HCT116 (cell line): ENCODE measurements at regions of chr10 and their contacts with region 1.

Region 1: DNA sequence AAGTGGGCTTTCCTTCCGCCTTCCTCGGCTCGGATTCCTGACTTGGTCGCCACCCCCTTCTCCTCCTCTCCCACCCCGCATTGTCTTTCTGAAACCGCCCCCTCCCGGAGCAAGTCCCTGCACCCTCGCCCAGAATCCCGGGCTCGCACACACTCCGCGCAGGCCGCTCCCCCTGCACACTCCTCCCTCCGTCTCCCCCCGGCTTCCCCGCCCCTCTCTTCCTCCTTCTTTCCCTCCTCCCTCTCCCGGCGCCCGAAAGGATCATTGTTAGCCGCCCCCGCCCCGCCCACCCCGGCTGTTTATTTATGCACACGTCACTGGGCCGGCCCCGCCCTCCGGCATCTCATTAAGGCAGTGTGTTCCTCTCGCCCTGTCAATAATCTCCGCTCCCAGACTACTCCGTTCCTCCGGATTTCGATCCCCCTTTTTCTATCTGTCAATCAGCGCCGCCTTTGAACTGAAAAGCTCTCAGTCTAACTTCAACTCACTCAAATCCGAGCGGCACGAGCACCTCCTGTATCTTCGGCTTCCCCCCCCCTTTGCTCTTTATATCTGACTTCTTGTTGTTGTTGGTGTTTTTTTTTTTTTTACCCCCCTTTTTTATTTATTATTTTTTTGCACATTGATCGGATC is at the start of gene TCF7L2:
- DNase-seq: peak; percentile 100
- ATAC-seq: peak; percentile 84
- H3K4me3 ChIP-seq: peak within 1 kb of the TSS; percentile 73 to 78
- H3K27ac ChIP-seq: peak within 1 kb of the TSS; percentile 100
- H3K4me1 ChIP-seq: peaks cover 39 to 47% of the 10 kb centered on the region in 2 experiments
- H3K27me3 ChIP-seq: no peaks in the 10 kb centered on the region
- CTCF ChIP-seq: no peak
- POLR2A ChIP-seq: no peak
- RAD21 ChIP-seq: no peak
- total RNA-seq, gene TCF7L2: 164 TPM

Region 2: DNA sequence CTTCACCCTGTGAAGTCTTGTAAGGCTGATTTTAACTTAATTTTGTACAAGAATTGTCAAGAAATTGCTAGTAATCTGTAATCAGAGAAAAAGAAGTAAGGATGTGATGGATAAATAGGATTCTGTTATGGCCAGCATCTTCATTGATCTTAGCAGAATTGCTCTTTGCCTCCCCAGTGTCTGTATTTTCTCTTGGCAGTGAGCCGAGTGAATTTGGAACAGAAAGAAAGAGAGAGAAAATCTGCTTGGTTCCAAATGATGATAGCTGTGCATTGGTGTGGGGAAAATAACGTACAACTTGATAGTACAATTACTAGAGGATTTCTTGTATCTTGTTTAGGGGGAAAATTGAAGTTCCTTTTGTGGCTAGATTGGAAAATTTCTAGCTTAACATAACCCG is 468.4 kb before region 1 on chr10:
- CTCF ChIA-PET with region 1: no interaction called
- POLR2A ChIA-PET with region 1: no interaction called
- RAD21 ChIA-PET with region 1: no interaction called
- intact Hi-C with region 1: loop called (anchors 5 kb)
- DNase-seq: no peak
- ATAC-seq: no peak
- H3K4me3 ChIP-seq: no peak overlapping the region
- H3K27ac ChIP-seq: peak overlapping the region; percentile 23; the same call in 1 of the 2 replicates
- H3K4me1 ChIP-seq: peaks cover 81 to 90% of the 10 kb centered on the region in 2 experiments
- H3K27me3 ChIP-seq: no peaks in the 10 kb centered on the region
- CTCF ChIP-seq: no peak
- POLR2A ChIP-seq: no peak
- RAD21 ChIP-seq: no peak

Region 3: GRCh38 chr10:112721080-112721698 is 228.8 kb before region 1 on chr10:
- CTCF ChIA-PET with region 1: no interaction called
- POLR2A ChIA-PET with region 1: no interaction called
- RAD21 ChIA-PET with region 1: no interaction called
- intact Hi-C with region 1: loop called (anchors 5 kb)
- DNase-seq: peak; percentile 51
- ATAC-seq: peak; percentile 82
- H3K4me3 ChIP-seq: no peak overlapping the region
- H3K27ac ChIP-seq: no peak overlapping the region
- H3K4me1 ChIP-seq: peaks cover 14 to 21% of the 10 kb centered on the region in 2 experiments
- H3K27me3 ChIP-seq: no peaks in the 10 kb centered on the region
- CTCF ChIP-seq: peak; percentile 39 to 82 (median 80); a peak in 5 of 6 replicates
- POLR2A ChIP-seq: no peak
- RAD21 ChIP-seq: peak; percentile 74

Region 4: DNA sequence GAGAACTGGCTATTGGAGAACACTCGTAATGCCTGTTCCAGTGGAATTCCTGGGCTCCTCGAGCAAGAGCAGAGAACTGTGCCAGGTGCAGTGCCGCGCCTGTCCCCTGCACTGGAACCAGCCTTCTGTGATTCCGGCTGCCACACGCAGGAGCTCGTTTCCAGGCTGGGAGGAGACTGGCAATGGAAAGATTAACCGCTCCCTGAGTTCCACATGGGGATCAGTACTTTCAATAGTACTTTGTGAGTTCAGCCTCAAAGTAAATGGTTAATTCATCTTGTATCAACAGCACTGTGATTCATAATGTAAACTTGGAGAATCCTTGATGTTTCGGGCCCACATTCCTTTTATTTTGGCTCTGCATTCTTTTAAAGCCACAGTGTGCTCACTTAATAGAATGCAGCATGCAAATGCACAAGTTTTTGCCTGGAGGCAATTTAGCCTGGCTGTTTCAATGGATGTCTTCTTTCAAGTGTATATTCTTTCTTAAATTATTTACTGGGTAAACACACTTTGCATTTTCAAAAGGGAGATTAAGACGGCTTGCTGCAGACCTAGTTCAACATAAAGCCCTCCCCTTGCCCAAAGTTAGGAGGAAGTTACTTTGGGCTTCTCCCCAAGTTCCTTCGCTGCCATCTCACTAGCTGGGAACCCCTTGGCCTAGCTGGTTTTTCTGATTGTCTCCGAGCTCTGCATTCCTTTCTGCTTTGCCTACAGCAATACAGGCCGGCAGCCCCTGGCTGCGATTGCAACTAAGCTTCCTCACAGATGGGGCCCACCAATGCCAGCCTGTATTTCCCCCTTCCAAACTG is 138.0 kb before region 1 on chr10:
- CTCF ChIA-PET with region 1: no interaction called
- POLR2A ChIA-PET with region 1: interaction called, 4 read pairs
- RAD21 ChIA-PET with region 1: no interaction called
- intact Hi-C with region 1: loop called (anchors 5 kb)
- DNase-seq: peak; percentile 91
- ATAC-seq: peak; percentile 84
- H3K4me3 ChIP-seq: peak overlapping the region; percentile 8 to 18; a peak in 2 of 4 replicates
- H3K27ac ChIP-seq: peak overlapping the region; percentile 78
- H3K4me1 ChIP-seq: peaks cover 77 to 87% of the 10 kb centered on the region in 2 experiments
- H3K27me3 ChIP-seq: no peaks in the 10 kb centered on the region
- CTCF ChIP-seq: no peak
- POLR2A ChIP-seq: no peak
- RAD21 ChIP-seq: peak; percentile 56

Region 5: GRCh38 chr10:112926906-112927688 is 22.9 kb before region 1 on chr10:
- CTCF ChIA-PET with region 1: no interaction called
- POLR2A ChIA-PET with region 1: no interaction called
- RAD21 ChIA-PET with region 1: no interaction called
- intact Hi-C with region 1: no loop called
- DNase-seq: no peak
- ATAC-seq: peak; percentile 34; the same call in 1 of the 2 replicates
- H3K4me3 ChIP-seq: no peak overlapping the region
- H3K27ac ChIP-seq: no peak overlapping the region
- H3K4me1 ChIP-seq: no peaks in the 10 kb centered on the region
- H3K27me3 ChIP-seq: no peaks in the 10 kb centered on the region
- CTCF ChIP-seq: 0 out of 6 replicates have a peak, but pooled peaks of 1 of the 3 experiments have one; percentile 18
- POLR2A ChIP-seq: no peak
- RAD21 ChIP-seq: no peak

Region 6: GRCh38 chr10:113073549-113074189 is 123.7 kb after region 1 on chr10:
- CTCF ChIA-PET with region 1: no interaction called
- POLR2A ChIA-PET with region 1: interaction called, 5 read pairs
- RAD21 ChIA-PET with region 1: interaction called in 1 of 2 experiments, 5 read pairs
- intact Hi-C with region 1: loop called (anchors 2 kb)
- DNase-seq: peak; percentile 97
- ATAC-seq: peak; percentile 80
- H3K4me3 ChIP-seq: peak overlapping the region; percentile 24
- H3K27ac ChIP-seq: peak overlapping the region; percentile 74
- H3K4me1 ChIP-seq: peaks cover 63 to 73% of the 10 kb centered on the region in 2 experiments
- H3K27me3 ChIP-seq: no peaks in the 10 kb centered on the region
- CTCF ChIP-seq: no peak
- POLR2A ChIP-seq: peak; percentile 77
- RAD21 ChIP-seq: no peak